ENCODE measurements at regions of chr10 and their contacts with region 1.

Region 1: GRCh38 chr10:96831867-96832720 is at the start of gene LCOR:
- DNase-seq: peak; percentile 90
- ATAC-seq: peak; percentile 91
- total RNA-seq, gene LCOR: 16.9 TPM

Region 2: DNA sequence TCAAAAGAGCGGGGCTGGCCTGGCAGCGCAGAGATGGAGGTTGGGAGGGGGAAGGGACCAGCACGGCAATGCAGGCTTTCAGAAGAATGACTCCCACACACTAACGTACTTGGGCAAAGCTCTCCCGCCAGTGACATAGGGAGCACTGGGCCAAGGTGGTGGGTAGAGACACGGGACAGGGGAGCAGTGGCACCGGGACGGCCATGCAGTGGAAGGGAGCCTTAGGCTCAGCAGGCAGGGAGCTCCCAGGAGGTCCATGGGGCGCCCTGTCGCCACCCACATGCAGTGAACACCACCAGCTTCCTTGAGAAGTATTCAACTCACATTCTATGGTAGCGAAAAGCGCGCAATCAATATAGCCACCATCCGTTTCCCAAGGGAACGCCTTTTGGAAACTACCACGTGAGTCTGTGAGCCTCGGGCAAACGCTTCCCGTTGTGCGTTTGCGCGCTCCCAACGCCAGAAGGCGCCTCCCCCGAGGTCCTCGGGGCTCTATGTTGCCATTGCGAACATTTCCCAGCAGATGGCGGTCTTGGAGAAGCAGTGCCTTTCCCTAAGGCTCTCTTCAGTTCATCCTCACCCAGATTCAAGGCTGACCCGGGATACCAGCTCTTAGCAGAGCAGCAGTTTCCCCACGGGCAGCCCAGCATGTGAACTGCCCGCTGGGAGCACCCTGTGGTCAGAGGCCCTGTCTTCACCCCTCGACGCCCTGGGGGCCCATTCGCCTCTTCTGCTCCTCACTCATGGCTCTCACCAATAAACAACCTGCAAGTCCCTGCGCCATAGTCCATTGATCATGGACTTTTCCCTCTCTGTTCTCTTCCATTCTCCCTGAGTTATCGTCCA is 456.9 kb before region 1 on chr10:
- intact Hi-C with region 1: loop called (anchors 5 kb)
- DNase-seq: peak; percentile 91
- ATAC-seq: peak; percentile 91

Region 3: GRCh38 chr10:96765406-96766240 is 66.5 kb before region 1 on chr10:
- intact Hi-C with region 1: loop called (anchors 10 kb)
- DNase-seq: peak; percentile 82
- ATAC-seq: peak; percentile 90

Region 4: GRCh38 chr10:96930469-96930868 is 98.4 kb after region 1 on chr10:
- intact Hi-C with region 1: no loop called
- DNase-seq: no peak
- ATAC-seq: no peak

Region 5: DNA sequence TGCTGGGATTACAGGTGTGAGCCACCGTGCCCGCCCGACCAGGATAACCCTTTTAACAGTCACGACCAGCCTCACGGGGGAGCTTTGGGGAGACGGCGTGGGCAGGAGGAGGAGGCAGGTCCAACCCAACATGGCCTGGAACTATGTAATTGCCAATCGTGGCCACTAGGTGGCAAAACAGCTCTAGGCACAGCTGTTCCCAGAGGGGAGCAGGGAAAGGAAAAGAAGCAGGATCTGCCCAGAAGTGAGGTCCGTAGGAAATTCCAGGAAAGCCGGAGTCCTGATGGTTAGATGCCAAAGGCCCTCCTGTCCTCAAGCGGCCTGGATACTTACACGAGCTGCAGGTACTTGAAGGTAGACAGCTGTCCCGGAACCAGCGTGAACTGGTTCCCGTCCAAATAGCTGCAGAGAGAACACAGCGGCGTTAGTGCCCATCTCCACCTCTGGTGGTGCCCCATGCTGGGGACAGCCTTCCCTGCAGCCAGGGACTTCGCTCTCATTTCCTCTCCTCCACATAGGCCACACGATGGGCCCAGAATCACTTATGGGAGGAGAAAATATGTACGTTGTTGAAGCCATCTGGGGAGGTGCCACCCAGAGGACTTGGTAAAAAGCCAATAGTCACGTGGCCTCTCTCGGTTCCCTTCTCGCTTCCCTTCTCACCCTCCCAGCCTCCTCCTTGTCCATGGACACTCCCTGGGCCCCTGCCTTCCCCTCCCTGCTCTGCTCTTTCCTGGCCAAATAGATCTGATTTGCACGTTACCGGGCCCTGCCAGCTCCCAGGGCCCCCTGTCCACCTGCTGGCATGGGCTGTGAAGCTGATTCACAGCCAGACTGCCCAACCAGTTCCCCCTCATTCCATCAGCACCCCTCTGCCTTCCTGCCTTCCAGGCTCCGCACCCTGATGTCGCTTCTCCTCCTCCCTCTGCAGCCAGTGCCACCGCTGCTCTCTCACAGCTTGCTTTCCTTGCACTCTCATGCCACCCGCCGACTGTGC is 205.6 kb after region 1 on chr10:
- intact Hi-C with region 1: no loop called
- DNase-seq: peak; percentile 79
- ATAC-seq: peak; percentile 96

Region 6: GRCh38 chr10:97234400-97234799 is 402.3 kb after region 1 on chr10:
- intact Hi-C with region 1: no loop called
- DNase-seq: no peak
- ATAC-seq: no peak